PC-3 (cell line): ENCODE measurements at regions of chr19 and their contacts with region 1.

Region 1: GRCh38 chr19:19531951-19532805 is 3.5 kb downstream of the YJEFN3 start:
- DNase-seq: peak; percentile 81
- ATAC-seq: peak; percentile 80
- H3K4me3 ChIP-seq: no peak overlapping the region
- H3K27ac ChIP-seq: no peak overlapping the region
- H3K4me1 ChIP-seq: no peaks in the 10 kb centered on the region
- H3K27me3 ChIP-seq: no peaks in the 10 kb centered on the region
- CTCF ChIP-seq: peak; percentile 91

Region 2: DNA sequence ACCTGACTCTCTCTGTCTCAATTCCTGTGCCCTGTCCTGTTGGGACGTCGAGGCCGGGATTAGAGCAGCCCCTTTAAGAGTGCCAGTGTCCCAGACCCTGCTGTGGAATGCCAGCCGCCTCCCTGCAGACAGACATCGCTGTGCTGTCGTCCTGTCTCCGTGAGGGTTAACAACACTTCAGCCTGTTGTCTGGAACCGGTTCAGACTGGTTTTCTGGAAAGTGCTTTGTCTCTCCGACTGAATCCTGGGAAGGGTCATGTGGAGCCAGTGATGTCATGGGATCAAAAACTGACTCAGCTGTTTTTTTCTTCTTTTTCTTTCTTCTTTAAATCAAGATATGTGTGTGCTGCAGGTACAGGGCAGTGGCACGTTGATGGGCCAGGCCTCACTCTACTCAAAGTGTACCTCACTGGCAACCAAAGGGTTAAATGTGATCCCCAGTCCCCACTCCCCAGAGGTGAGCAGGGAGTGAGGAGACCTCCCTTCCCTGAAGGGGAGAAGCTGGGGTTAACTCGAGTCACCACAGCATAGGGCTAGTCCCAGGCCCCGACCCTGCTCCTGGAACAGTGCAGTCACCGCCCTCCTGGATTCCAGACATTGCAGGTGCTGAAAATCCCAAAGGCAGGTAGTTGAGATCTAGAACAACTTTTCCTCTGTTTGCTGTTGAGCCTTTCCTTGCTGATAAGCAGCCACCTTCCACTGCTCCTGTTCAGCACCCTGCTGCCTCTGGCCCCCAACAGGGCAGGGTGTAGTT is 67.7 kb before region 1 on chr19:
- CTCF ChIA-PET with region 1: no interaction called
- POLR2A ChIA-PET with region 1: no interaction called
- intact Hi-C with region 1: no loop called
- DNase-seq: no peak
- ATAC-seq: no peak
- H3K4me3 ChIP-seq: no peak overlapping the region
- H3K27ac ChIP-seq: no peak overlapping the region
- H3K4me1 ChIP-seq: peaks cover 11% of the 10 kb centered on the region
- H3K27me3 ChIP-seq: no peaks in the 10 kb centered on the region
- CTCF ChIP-seq: no peak

Region 3: DNA sequence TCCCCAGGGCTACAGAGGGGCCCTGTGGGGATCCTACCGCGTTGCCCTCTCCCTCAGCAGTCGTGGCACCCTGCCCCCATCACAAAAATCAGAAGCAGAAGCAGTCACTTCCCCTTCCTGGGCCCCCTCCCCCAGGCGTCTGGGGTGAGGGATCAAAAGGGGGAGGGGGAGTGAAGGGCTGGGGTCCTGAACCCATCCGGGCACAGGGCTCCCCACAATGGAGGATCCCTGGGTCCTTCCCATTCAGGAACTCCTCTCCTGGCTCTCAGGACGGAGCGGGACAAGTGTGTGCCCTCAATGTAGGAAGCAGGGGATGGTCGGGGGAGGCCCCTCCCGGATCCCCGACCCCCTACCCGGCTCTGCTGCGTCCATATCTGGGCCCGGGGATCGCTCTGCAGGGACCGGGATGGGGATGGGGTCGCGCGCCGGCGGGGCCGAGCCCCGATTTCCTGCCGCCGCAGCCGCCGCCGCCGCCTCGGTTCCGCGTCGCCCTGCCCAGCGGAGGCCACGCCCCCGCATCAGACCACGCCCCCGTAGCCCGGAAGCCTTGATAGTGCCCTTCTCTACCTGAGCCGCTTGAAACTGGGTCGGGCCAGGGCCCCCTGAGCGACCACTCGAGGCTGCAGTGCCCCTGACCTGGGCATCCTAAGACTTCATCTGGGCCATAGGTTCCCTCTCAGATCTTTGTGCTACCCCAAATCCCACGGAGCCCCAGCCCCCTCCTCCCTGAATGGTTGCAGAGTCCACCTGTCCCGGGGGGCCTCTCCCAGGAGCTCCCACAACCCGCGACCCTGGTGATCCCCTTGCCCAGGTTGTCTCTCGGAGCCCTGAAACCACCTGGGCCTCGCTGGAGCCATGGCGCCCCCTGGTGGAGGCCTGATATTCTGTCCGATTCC is 111.2 kb after region 1 on chr19 and contains the start of gene GMIP:
- CTCF ChIA-PET with region 1: interaction called, 3 read pairs
- POLR2A ChIA-PET with region 1: no interaction called
- intact Hi-C with region 1: loop called (anchors 1 kb)
- DNase-seq: peak; percentile 68
- ATAC-seq: peak; percentile 86
- H3K4me3 ChIP-seq: peak within 1 kb of the TSS; percentile 91
- H3K27ac ChIP-seq: peak within 1 kb of the TSS; percentile 56
- H3K4me1 ChIP-seq: peaks cover 3% of the 10 kb centered on the region; the same call in 1 of the 2 replicates
- H3K27me3 ChIP-seq: no peaks in the 10 kb centered on the region
- CTCF ChIP-seq: peak; percentile 96
- total RNA-seq, gene GMIP: 6.3 and 11.1 TPM in 2 replicates

Region 4: DNA sequence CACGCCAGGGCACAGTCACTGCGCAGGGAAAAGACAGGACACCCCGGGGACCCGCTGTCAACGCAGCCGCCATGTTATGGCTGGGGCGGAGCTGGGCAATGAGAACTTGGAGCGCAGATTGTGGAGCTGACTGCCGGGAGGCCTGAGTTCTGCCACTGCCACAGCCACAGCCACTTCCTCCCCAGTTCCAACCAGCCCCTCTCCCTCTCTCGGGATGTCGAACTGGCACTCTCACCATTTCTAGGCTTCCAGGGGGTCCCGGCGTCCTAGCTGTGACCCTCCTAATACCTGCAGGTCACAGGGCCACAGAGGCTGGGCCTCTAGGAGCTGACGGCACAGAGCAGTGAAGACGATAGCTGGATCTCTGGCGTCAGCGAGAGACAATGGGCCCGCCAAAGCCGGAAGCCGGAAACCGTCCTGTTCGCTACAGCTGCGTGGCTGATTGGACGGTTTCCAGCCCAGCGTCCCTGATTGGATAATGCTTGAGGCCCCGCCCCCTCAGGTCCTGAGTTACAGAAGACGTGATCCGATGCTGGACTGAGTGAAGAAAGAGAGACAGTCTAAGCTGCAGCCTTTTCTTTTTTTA is 289.3 kb after region 1 on chr19 and contains the start of gene ZNF506:
- CTCF ChIA-PET with region 1: no interaction called
- POLR2A ChIA-PET with region 1: interaction called, 19 read pairs
- intact Hi-C with region 1: no loop called
- DNase-seq: peak; percentile 4
- ATAC-seq: no peak
- H3K4me3 ChIP-seq: no peak within 1 kb of the TSS
- H3K27ac ChIP-seq: no peak within 1 kb of the TSS
- H3K4me1 ChIP-seq: no peaks in the 10 kb centered on the region
- H3K27me3 ChIP-seq: no peaks in the 10 kb centered on the region
- CTCF ChIP-seq: no peak
- total RNA-seq, gene ZNF506: 2.4 TPM in 1 of 2 replicates, not detected in the other

Region 5: GRCh38 chr19:19956434-19957075 is 424.4 kb after region 1 on chr19:
- CTCF ChIA-PET with region 1: no interaction called
- POLR2A ChIA-PET with region 1: no interaction called
- intact Hi-C with region 1: loop called (anchors 10 kb)
- DNase-seq: no peak
- ATAC-seq: no peak
- H3K4me3 ChIP-seq: no peak overlapping the region
- H3K27ac ChIP-seq: no peak overlapping the region
- H3K4me1 ChIP-seq: no peaks in the 10 kb centered on the region
- H3K27me3 ChIP-seq: no peaks in the 10 kb centered on the region
- CTCF ChIP-seq: no peak